Head of caudate nucleus (tissue), 42 donors: ENCODE measurements at regions of chr3 and their contacts with region 1.

Region 1: DNA sequence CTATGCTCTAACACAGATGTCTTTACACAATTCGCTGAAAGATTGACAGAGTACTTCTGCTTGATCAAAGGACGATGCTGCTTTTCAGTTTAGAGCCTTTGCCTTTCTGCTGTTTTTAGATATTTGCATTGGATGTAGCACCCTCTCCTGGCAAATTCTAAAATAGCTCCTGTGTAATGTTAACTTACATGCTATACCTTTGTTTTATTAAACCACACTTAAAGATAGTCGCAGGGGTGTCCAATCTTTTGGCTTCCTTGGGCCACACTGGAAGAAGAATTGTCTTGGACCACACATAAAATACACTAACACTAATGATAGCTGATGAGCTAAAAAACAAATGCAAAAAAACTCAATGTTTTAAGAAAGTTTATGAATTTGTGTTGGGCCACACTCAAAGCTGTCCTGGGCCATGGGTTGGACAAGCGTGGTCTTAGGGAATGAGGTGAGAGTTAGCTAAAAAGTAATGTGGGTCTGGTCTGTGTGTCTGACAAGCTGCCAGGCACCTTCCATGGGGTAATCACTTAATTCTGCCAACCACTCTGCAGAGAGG is 62.9 kb downstream of the ATG7 start:
- DNase-seq: peak in 13 of 42 donors; percentile 15 to 72 (median 46)

Region 2: GRCh38 chr3:11155341-11156025 is 179.6 kb before region 1 on chr3:
- intact Hi-C with region 1: loop called (anchors 5 kb)
- DNase-seq: peak; percentile 50 to 93 (median 80)